ENCODE measurements at regions of chr3 and their contacts with region 1.

Region 1: GRCh38 chr3:73018790-73019441 is 22.3 kb downstream of the PPP4R2 start:
- DNase-seq: no peak
- H3K4me3 ChIP-seq: no peak overlapping the region
- H3K27ac ChIP-seq: no peak overlapping the region
- H3K27me3 ChIP-seq: no peaks in the 10 kb centered on the region
- CTCF ChIP-seq: no peak

Region 2: GRCh38 chr3:72380193-72380592 is 638.7 kb before region 1 on chr3:
- CTCF ChIA-PET with region 1: no interaction called
- POLR2A ChIA-PET with region 1: no interaction called
- DNase-seq: no peak
- H3K4me3 ChIP-seq: no peak overlapping the region
- H3K27ac ChIP-seq: no peak overlapping the region
- H3K27me3 ChIP-seq: no peaks in the 10 kb centered on the region
- CTCF ChIP-seq: no peak

Region 3: GRCh38 chr3:72768006-72768441 is 250.9 kb before region 1 on chr3:
- CTCF ChIA-PET with region 1: no interaction called
- POLR2A ChIA-PET with region 1: no interaction called
- DNase-seq: no peak
- H3K4me3 ChIP-seq: no peak overlapping the region
- H3K27ac ChIP-seq: no peak overlapping the region
- H3K27me3 ChIP-seq: no peaks in the 10 kb centered on the region
- CTCF ChIP-seq: no peak

Region 4: DNA sequence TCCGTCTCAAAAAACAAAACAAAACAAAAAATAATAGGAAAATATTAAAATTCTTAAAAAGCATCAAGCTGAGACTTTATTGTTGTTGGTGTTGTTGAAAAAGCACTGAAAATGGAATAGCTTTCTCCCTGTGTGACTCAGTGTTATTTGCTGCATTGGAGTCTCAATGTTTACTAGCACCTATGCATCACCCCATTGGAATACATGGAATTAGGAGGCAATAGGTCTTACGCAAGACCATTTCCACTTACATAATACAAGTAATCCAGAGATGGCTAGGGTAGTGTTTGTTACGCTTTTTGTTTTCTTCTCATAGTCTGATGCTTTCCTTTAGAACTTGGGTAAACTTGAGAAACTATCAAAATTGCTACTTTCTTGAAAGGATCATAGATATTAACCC is 115.9 kb before region 1 on chr3:
- CTCF ChIA-PET with region 1: no interaction called
- POLR2A ChIA-PET with region 1: no interaction called
- DNase-seq: no peak
- H3K4me3 ChIP-seq: no peak overlapping the region
- H3K27ac ChIP-seq: peak overlapping the region; percentile 39
- H3K27me3 ChIP-seq: no peaks in the 10 kb centered on the region
- CTCF ChIP-seq: no peak

Region 5: DNA sequence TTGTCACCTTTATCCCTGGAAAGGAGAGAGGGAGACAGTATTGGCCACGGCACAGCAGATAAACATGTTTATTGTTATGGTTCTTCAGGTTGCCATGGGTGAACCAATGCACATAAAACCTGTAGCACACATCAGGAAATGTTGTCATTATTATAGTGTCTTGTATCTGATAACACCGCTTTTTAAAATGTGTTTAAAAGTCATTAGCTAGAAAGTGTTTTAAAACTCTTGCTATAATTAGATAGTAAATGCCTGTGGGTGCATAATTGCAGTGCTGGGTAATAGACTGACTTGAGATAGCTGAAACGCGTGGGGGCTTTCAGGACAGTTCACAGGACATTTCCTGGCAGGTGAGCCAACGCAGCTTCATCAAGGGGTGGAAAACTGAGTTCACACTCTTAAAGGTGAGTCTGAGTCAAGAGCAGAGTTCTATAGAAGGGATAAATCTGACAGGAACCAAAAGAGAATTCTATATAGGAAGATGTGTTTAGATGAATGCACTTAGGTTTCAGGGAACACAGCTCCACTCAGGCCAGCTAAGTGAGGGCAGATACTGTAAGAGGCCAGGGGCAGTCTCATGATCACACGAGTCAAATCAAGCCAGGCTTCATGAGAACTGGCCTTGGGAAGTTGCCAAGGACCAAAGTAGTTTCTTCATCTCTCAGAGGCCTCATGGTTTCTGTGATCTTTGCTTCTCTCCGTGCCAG is 58.0 kb before region 1 on chr3:
- CTCF ChIA-PET with region 1: interaction called, 3 read pairs
- POLR2A ChIA-PET with region 1: interaction called, 10 read pairs
- DNase-seq: peak; percentile 33
- H3K4me3 ChIP-seq: no peak overlapping the region
- H3K27ac ChIP-seq: no peak overlapping the region
- H3K27me3 ChIP-seq: no peaks in the 10 kb centered on the region
- CTCF ChIP-seq: no peak

Region 6: DNA sequence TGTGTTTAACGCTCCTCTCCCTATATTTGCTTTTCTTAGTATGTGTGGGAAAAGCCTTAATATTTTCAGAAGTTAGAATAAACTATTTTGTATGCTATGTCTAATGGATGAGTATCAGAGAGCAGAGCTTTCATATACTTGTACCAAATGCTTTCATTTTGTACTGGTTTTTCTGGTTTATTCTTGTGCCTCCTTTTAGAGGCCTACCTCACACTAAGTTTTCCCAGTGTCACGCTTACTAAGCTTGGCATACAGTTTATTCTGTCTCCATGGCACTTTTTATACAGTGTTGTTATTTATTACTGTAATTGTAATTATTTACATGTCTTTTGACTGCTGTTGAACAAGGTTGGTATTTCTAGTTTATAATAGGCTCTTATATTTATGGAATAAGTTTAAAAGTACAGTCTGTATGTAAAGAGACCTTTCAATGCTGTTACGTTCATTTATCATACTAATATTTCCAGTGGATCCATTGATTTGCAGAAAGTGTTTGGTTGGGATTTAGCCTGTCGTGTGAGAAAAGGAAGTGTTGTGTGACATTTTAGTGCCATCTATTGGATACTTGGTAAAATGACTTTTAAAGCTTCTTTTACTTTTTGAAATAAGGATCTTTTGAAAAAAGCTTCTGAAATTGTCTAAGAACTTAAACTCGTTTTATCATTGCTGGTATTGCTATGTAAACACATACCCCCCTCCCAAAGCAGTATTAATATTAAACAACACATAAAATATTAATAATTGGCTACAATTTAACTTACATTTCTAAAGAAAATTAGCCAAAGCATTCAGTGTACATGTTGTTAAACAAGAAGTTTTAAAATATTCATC is 37.3 kb after region 1 on chr3:
- CTCF ChIA-PET with region 1: interaction called, 10 read pairs
- POLR2A ChIA-PET with region 1: no interaction called
- DNase-seq: no peak
- H3K4me3 ChIP-seq: no peak overlapping the region
- H3K27ac ChIP-seq: no peak overlapping the region
- H3K27me3 ChIP-seq: no peaks in the 10 kb centered on the region
- CTCF ChIP-seq: peak; percentile 52

Measured in AG04450 (cell line).